Naive thymus-derived CD4-positive, alpha-beta T cell (primary cell): ENCODE measurements at regions of chr3 and their contacts with region 1.

Region 1: DNA sequence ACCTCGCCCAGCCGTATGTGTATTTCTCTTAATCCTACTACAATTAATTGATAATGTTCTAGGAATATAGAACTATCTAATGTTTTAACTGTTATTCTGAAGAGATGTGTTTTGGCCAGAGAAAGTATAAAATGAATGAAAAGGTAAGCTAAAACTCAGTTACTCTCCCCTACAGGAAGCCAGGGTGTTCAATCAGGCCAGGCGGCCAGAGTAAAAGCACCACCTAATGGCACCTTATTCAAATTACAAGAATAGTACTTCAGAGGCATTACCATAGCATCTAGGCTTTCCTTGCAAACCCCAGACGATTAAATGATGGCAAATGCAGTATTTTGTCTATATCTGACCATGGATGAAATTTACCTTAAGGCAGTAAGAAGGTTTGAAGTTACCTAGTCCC is 10.4 kb downstream of the SLC12A8 start:
- DNase-seq: peak in 3 of 9 donors; percentile 16 to 37 (median 27)
- ATAC-seq: peak; percentile 45
- H3K4me3 ChIP-seq: no peak overlapping the region
- H3K4me3 Mint-ChIP-seq: no peak overlapping the region
- H3K27ac ChIP-seq: no peak overlapping the region
- H3K27ac Mint-ChIP-seq: no peak overlapping the region
- H3K4me1 ChIP-seq: no peaks in the 10 kb centered on the region
- H3K4me1 Mint-ChIP-seq: peaks cover 0 to 8% (median 0%) of the 10 kb centered on the region in 7 donors
- H3K27me3 ChIP-seq: no peaks in the 10 kb centered on the region
- H3K27me3 Mint-ChIP-seq: peaks cover 0 to 22% (median 0%) of the 10 kb centered on the region in 5 donors

Region 2: GRCh38 chr3:124761250-124761796 is 440.9 kb before region 1 on chr3:
- CTCF ChIA-PET with region 1: interaction called, 3 read pairs
- POLR2A ChIA-PET with region 1: no interaction called
- intact Hi-C with region 1: loop called in 1 of 2 experiments (anchors 5 kb)
- DNase-seq: peak; percentile 52 to 76 (median 68)
- ATAC-seq: peak; percentile 92
- H3K4me3 ChIP-seq: no peak overlapping the region
- H3K4me3 Mint-ChIP-seq: peak overlapping the region in 9 of 10 donors; percentile 16 to 84 (median 72)
- H3K27ac ChIP-seq: no peak overlapping the region
- H3K27ac Mint-ChIP-seq: peak overlapping the region in 3 of 9 donors; percentile 5 to 92 (median 65)
- H3K4me1 ChIP-seq: no peaks in the 10 kb centered on the region
- H3K4me1 Mint-ChIP-seq: peaks cover 0 to 7% (median 5%) of the 10 kb centered on the region in 7 donors
- H3K27me3 ChIP-seq: no peaks in the 10 kb centered on the region
- H3K27me3 Mint-ChIP-seq: peaks cover 0 to 1% (median 0%) of the 10 kb centered on the region in 5 donors

Region 3: GRCh38 chr3:124928333-124929202 is 273.6 kb before region 1 on chr3:
- CTCF ChIA-PET with region 1: no interaction called
- POLR2A ChIA-PET with region 1: no interaction called
- intact Hi-C with region 1: loop called (anchors 1 to 2 kb)
- DNase-seq: peak; percentile 19 to 61 (median 37)
- ATAC-seq: peak; percentile 79
- H3K4me3 ChIP-seq: no peak overlapping the region
- H3K4me3 Mint-ChIP-seq: no peak overlapping the region
- H3K27ac ChIP-seq: no peak overlapping the region
- H3K27ac Mint-ChIP-seq: peak overlapping the region in 2 of 9 donors; percentile 18 to 49
- H3K4me1 ChIP-seq: no peaks in the 10 kb centered on the region
- H3K4me1 Mint-ChIP-seq: peaks cover 0 to 8% (median 0%) of the 10 kb centered on the region in 7 donors
- H3K27me3 ChIP-seq: no peaks in the 10 kb centered on the region
- H3K27me3 Mint-ChIP-seq: peaks cover 0 to 57% (median 11%) of the 10 kb centered on the region in 5 donors

Region 4: GRCh38 chr3:125150525-125151441 is 51.4 kb before region 1 on chr3:
- CTCF ChIA-PET with region 1: no interaction called
- POLR2A ChIA-PET with region 1: no interaction called
- intact Hi-C with region 1: no loop called
- DNase-seq: peak in 5 of 9 donors; percentile 30 to 45 (median 43)
- ATAC-seq: peak; percentile 74
- H3K4me3 ChIP-seq: no peak overlapping the region
- H3K4me3 Mint-ChIP-seq: no peak overlapping the region
- H3K27ac ChIP-seq: no peak overlapping the region
- H3K27ac Mint-ChIP-seq: peak overlapping the region in 2 of 9 donors; percentile 45 to 49
- H3K4me1 ChIP-seq: no peaks in the 10 kb centered on the region
- H3K4me1 Mint-ChIP-seq: peaks cover 0 to 28% (median 16%) of the 10 kb centered on the region in 7 donors
- H3K27me3 ChIP-seq: no peaks in the 10 kb centered on the region
- H3K27me3 Mint-ChIP-seq: peaks cover 0 to 37% (median 0%) of the 10 kb centered on the region in 5 donors